Endothelial cell of umbilical vein (primary cell): ENCODE measurements at regions of chr19 and their contacts with region 1.

Region 1: GRCh38 chr19:10936661-10937084 is 8.1 kb downstream of the TIMM29 start:
- DNase-seq: peak; percentile 86
- H3K4me3 ChIP-seq: no peak overlapping the region
- H3K27ac ChIP-seq: no peak overlapping the region
- H3K4me1 ChIP-seq: peaks cover 7% of the 10 kb centered on the region
- H3K27me3 ChIP-seq: no peaks in the 10 kb centered on the region
- CTCF ChIP-seq: peak; percentile 49 to 60
- POLR2A ChIP-seq: no peak

Region 2: GRCh38 chr19:10747271-10747670 is 189.4 kb before region 1 on chr19:
- CTCF ChIA-PET with region 1: no interaction called
- POLR2A ChIA-PET with region 1: no interaction called
- dilution Hi-C with region 1: no loop called
- intact Hi-C with region 1: no loop called
- DNase-seq: no peak
- H3K4me3 ChIP-seq: no peak overlapping the region
- H3K27ac ChIP-seq: no peak overlapping the region
- H3K4me1 ChIP-seq: peaks cover 30% of the 10 kb centered on the region
- H3K27me3 ChIP-seq: no peaks in the 10 kb centered on the region
- CTCF ChIP-seq: no peak
- POLR2A ChIP-seq: no peak

Region 3: DNA sequence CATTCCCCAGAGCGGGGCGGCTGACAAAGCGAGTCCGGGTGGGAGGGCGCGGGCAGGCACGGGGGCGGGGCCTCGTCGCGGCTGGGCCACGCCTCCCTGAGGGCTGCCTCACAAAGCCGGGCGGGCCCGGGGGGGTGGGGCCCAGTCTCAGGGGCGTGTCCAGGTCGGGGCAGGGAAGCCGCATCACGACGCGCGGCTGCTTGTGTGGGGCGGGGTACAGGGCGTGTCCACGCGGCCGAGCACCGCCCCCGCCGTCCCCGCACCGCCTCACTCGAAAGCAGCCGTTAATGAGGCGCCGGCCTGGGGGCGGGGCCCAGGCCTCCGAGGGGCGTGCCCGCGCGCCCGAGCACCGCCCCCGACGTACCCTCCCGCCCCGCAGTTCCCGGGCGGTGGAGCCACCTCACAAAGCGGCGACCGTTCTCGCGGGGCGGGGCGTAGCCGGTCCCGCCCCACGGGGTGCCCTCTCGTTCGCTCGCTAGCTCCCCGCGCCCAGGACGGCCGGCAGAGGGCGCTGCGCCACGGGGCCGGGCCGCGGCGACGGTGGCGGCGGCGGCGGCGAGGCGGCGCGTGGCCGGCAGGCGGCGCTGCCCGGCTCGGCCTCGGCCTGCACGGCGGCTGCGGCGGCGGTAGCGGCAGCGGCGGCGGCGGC is 65.6 kb before region 1 on chr19 and contains the start of gene CARM1:
- CTCF ChIA-PET with region 1: interaction called, 19 read pairs
- POLR2A ChIA-PET with region 1: no interaction called
- dilution Hi-C with region 1: no loop called
- intact Hi-C with region 1: no loop called
- DNase-seq: peak; percentile 99
- H3K4me3 ChIP-seq: peak within 1 kb of the TSS; percentile 81 to 100 (median 99)
- H3K27ac ChIP-seq: peak within 1 kb of the TSS; percentile 52
- H3K4me1 ChIP-seq: peaks cover 12% of the 10 kb centered on the region
- H3K27me3 ChIP-seq: no peaks in the 10 kb centered on the region
- CTCF ChIP-seq: peak; percentile 65 to 66
- POLR2A ChIP-seq: no peak
- total RNA-seq, gene CARM1: 70.8 and 72.2 TPM in 2 replicates

Region 4: GRCh38 chr19:10960314-10961072 is 23.8 kb after region 1 on chr19 and contains the start of gene SMARCA4:
- CTCF ChIA-PET with region 1: interaction called, 35 read pairs
- POLR2A ChIA-PET with region 1: interaction called, 3 read pairs
- dilution Hi-C with region 1: no loop called
- intact Hi-C with region 1: no loop called
- DNase-seq: peak; percentile 97
- H3K4me3 ChIP-seq: peak within 1 kb of the TSS; percentile 72 to 100 (median 98)
- H3K27ac ChIP-seq: peak within 1 kb of the TSS; percentile 51
- H3K4me1 ChIP-seq: peaks cover 9% of the 10 kb centered on the region
- H3K27me3 ChIP-seq: no peaks in the 10 kb centered on the region
- CTCF ChIP-seq: no peak
- POLR2A ChIP-seq: peak; percentile 94
- total RNA-seq, gene SMARCA4: 177 and 178 TPM in 2 replicates

Region 5: DNA sequence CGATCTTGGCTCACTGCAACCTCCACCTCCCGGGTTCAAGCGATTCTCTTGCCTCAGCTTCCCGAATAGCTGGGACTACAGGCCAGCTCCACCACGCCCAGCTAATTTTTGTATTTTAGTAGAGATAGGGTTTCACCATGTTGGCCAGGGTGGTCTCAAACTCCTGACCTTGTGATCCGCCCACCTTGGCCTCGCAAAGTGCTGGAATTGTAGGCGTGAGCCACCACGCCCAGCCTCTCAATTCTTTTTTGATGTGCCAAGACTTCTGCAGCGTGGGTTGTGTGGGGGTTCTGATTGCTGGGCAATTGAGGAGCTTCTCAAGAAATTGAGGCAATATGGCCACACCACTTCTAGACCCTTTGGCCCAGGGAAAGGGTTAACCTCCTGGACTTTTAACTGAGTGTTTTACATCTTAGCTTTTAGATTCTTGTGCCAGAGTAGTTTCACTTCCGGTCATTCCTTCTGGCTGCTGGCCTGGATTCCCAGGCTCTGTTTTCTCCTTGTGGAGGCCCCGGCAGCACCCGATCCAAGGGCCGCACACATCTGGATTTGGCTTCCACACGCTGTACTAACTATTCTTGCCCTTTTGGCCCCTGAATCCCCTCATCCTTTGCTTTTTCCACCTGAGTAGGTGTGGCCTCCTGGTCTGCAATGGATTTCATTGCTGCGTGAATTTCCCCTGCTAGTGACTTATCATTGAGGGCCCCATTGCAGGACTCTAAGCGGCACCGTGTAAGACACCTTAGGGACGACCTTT is 38.9 kb after region 1 on chr19:
- CTCF ChIA-PET with region 1: interaction called, 24 read pairs
- POLR2A ChIA-PET with region 1: interaction called, 5 read pairs
- dilution Hi-C with region 1: no loop called
- intact Hi-C with region 1: loop called (anchors 2 kb)
- DNase-seq: peak; percentile 58
- H3K4me3 ChIP-seq: no peak overlapping the region
- H3K27ac ChIP-seq: no peak overlapping the region
- H3K4me1 ChIP-seq: peaks cover 7% of the 10 kb centered on the region
- H3K27me3 ChIP-seq: no peaks in the 10 kb centered on the region
- CTCF ChIP-seq: no peak
- POLR2A ChIP-seq: no peak

Region 6: GRCh38 chr19:11007962-11008532 is 71.4 kb after region 1 on chr19:
- CTCF ChIA-PET with region 1: interaction called, 10 read pairs
- POLR2A ChIA-PET with region 1: no interaction called
- dilution Hi-C with region 1: no loop called
- intact Hi-C with region 1: no loop called
- DNase-seq: no peak
- H3K4me3 ChIP-seq: no peak overlapping the region
- H3K27ac ChIP-seq: no peak overlapping the region
- H3K4me1 ChIP-seq: no peaks in the 10 kb centered on the region
- H3K27me3 ChIP-seq: no peaks in the 10 kb centered on the region
- CTCF ChIP-seq: no peak
- POLR2A ChIP-seq: no peak

Region 7: GRCh38 chr19:11035441-11036377 is 99.0 kb after region 1 on chr19:
- CTCF ChIA-PET with region 1: interaction called, 19 read pairs
- POLR2A ChIA-PET with region 1: no interaction called
- dilution Hi-C with region 1: no loop called
- intact Hi-C with region 1: no loop called
- DNase-seq: peak; percentile 69
- H3K4me3 ChIP-seq: no peak overlapping the region
- H3K27ac ChIP-seq: no peak overlapping the region
- H3K4me1 ChIP-seq: no peaks in the 10 kb centered on the region
- H3K27me3 ChIP-seq: no peaks in the 10 kb centered on the region
- CTCF ChIP-seq: peak; percentile 86 to 94
- POLR2A ChIP-seq: no peak

Region 8: DNA sequence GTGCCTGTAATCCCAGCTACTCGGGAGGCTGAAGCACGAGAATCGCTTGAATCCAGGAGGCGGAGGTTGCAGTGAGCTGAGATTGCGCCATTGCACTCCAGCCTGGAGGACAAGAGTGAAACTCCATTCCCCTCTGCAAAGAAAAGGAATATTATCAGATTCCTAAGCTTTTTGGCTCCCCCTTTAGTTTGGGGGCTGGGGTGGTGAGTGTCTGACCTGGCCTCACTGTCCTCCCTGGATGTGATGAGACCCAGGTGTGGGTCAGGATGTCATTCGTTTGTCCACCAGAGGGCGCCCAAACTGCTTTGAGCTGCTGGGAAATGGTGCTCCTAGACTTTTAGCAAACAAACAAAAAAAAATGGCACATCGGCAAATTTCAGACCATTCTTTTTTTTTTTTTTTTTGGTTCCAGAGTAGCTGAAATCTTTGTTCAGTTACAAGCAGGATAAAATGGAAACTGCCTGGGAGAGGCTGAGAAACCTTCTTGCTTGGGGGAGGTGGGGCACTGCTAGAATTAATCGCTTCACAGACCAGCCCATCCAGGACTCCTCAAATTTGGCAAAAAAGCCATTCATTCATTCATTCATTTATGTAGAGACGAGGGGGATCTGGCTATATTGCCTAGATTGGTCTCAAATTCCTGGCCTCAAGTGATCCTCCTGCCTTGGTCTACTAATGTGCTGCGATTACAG is 189.5 kb after region 1 on chr19:
- CTCF ChIA-PET with region 1: interaction called, 17 read pairs
- POLR2A ChIA-PET with region 1: no interaction called
- dilution Hi-C with region 1: no loop called
- intact Hi-C with region 1: no loop called
- DNase-seq: peak; percentile 68
- H3K4me3 ChIP-seq: no peak overlapping the region
- H3K27ac ChIP-seq: no peak overlapping the region
- H3K4me1 ChIP-seq: peaks cover 4% of the 10 kb centered on the region
- H3K27me3 ChIP-seq: no peaks in the 10 kb centered on the region
- CTCF ChIP-seq: peak; percentile 61 to 72
- POLR2A ChIP-seq: no peak